ENCODE measurements at regions of chr13 and their contacts with region 1.

Region 1: GRCh38 chr13:49110122-49110912 is 109.8 kb upstream of the MLNR start:
- DNase-seq: peak; percentile 65 to 82
- H3K4me3 ChIP-seq: peak overlapping the region; percentile 71
- H3K27ac ChIP-seq: peak overlapping the region; percentile 71
- H3K4me1 ChIP-seq: peaks cover 32% of the 10 kb centered on the region
- H3K27me3 ChIP-seq: no peaks in the 10 kb centered on the region
- CTCF ChIP-seq: no peak

Region 2: DNA sequence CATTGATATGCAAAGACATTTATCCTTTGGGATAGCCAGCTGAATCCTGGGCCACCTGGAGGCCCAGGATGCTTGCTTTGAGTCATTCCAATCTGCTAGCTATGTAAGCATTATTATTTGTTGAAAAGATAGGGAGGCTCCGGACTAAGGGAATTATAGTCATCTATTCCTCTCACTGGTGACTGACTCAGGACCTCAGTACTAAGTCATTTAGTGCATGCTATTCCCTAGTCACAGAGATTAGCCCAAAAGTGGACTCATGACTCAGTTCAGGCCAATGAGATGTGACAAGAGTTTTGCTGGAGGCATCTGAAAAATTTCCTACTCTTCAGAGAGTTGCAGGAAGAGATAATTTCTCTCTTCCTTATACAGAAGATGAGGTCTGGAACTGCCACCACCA is 945.3 kb before region 1 on chr13:
- CTCF ChIA-PET with region 1: no interaction called
- POLR2A ChIA-PET with region 1: no interaction called
- intact Hi-C with region 1: no loop called
- DNase-seq: no peak
- H3K4me3 ChIP-seq: no peak overlapping the region
- H3K27ac ChIP-seq: no peak overlapping the region
- H3K4me1 ChIP-seq: no peaks in the 10 kb centered on the region
- H3K27me3 ChIP-seq: no peaks in the 10 kb centered on the region
- CTCF ChIP-seq: no peak

Region 3: DNA sequence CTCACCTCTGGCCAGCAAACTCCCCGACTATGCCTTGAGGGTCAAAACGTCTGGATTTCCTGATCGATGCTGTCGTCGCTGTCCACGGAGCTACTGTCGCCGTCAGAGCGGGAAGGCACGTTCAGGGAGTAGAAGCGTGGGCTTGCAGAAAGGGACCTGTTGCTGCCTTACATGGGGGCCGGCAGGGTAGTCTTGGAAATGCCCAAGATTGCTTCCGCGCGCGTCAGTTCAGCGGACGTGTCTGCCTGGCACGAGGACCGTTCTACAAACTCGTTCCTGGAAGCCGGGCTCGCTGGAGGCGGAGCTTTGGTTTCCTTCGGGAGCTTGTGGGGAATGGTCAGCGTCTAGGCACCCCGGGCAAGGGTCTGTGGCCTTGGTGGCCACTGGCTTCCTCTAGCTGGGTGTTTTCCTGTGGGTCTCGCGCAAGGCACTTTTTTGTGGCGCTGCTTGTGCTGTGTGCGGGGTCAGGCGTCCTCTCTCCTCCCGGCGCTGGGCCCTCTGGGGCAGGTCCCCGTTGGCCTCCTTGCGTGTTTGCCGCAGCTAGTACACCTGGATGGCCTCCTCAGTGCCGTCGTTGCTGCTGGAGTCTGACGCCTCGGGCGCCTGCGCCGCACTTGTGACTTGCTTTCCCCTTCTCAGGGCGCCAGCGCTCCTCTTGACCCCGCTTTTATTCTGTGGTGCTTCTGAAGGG is 791.4 kb before region 1 on chr13:
- CTCF ChIA-PET with region 1: no interaction called
- POLR2A ChIA-PET with region 1: interaction called, 24 read pairs
- intact Hi-C with region 1: no loop called
- DNase-seq: no peak
- H3K4me3 ChIP-seq: no peak overlapping the region
- H3K27ac ChIP-seq: no peak overlapping the region
- H3K4me1 ChIP-seq: no peaks in the 10 kb centered on the region
- H3K27me3 ChIP-seq: no peaks in the 10 kb centered on the region
- CTCF ChIP-seq: no peak

Region 4: GRCh38 chr13:49132479-49133002 is 22.2 kb after region 1 on chr13:
- CTCF ChIA-PET with region 1: no interaction called
- POLR2A ChIA-PET with region 1: no interaction called
- intact Hi-C with region 1: no loop called
- DNase-seq: no peak
- H3K4me3 ChIP-seq: no peak overlapping the region
- H3K27ac ChIP-seq: no peak overlapping the region
- H3K4me1 ChIP-seq: no peaks in the 10 kb centered on the region
- H3K27me3 ChIP-seq: no peaks in the 10 kb centered on the region
- CTCF ChIP-seq: no peak

Measured in PC-9 (cell line).